ENCODE measurements at regions of chr2 and their contacts with region 1.

Region 1: GRCh38 chr2:240060977-240061591 is 7.8 kb upstream of the OR6B3 start:
- DNase-seq: peak; percentile 42
- H3K4me3 Mint-ChIP-seq: no peak overlapping the region
- H3K27ac Mint-ChIP-seq: no peak overlapping the region
- H3K4me1 Mint-ChIP-seq: no peaks in the 10 kb centered on the region
- H3K27me3 Mint-ChIP-seq: peaks cover 21% of the 10 kb centered on the region

Region 2: DNA sequence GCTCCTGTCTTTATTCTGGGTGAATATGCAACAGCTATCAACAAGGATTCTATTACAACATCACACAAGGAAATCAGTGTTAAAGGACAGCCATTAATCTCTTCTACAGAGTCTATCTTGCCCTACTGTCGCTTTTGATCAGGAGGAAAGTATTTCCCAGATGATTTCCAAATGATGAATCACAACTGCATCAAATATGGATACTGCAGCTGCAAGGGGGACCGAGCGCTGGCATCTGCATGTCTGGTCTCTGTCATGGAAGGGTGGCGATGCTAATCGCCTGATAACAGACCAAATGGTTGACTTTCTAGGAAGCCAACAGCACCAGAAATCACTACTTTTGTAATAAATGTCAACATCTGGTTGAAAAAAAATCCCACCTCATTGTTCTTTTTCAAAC is 13.5 kb after region 1 on chr2:
- CTCF ChIA-PET with region 1: interaction called, 10 read pairs
- POLR2A ChIA-PET with region 1: no interaction called
- intact Hi-C with region 1: no loop called
- DNase-seq: no peak
- H3K4me3 Mint-ChIP-seq: no peak overlapping the region
- H3K27ac Mint-ChIP-seq: no peak overlapping the region
- H3K4me1 Mint-ChIP-seq: no peaks in the 10 kb centered on the region
- H3K27me3 Mint-ChIP-seq: peaks cover 9% of the 10 kb centered on the region

Region 3: GRCh38 chr2:240121675-240122074 is 60.6 kb after region 1 on chr2:
- CTCF ChIA-PET with region 1: interaction called, 10 read pairs
- POLR2A ChIA-PET with region 1: no interaction called
- intact Hi-C with region 1: no loop called
- DNase-seq: no peak
- H3K4me3 Mint-ChIP-seq: no peak overlapping the region
- H3K27ac Mint-ChIP-seq: no peak overlapping the region
- H3K4me1 Mint-ChIP-seq: peaks cover 11% of the 10 kb centered on the region
- H3K27me3 Mint-ChIP-seq: peaks cover 2% of the 10 kb centered on the region

Region 4: DNA sequence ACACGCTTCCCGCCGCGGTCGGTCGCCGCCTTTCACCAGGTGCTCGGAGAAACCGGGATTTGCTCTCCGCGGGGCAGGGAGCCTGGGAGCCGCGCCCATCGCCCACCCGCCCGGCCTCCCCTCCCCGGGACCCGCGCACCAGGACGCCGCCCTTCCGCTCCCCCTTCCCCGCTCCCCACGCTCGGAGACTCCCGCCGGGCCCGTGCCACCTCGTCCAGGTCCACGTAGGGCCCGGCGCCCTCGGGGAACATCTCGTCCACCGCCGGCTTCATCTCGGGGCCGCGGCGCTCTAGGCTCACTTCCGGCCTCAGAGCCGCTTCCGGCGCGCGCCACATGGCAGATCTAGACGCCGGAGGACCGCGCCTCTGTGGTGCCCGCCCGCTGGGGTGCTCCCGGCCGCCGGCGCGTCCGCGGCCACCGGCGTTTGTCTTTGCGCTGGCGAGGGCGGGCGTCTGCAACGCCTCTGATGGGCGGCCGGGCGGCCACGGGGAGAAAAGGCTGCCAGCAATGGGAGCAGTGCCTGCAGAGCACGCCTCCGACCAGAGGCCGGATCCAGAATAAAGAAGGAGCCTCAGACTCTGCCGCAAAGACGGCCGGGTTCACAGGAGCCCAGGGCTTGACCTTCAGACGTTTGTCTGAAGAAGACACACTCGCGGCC is 75.1 kb after region 1 on chr2 and contains the start of gene COPS9:
- CTCF ChIA-PET with region 1: interaction called, 172 read pairs
- POLR2A ChIA-PET with region 1: no interaction called
- intact Hi-C with region 1: no loop called
- DNase-seq: peak; percentile 91
- H3K4me3 Mint-ChIP-seq: peak within 1 kb of the TSS; percentile 92
- H3K27ac Mint-ChIP-seq: peak within 1 kb of the TSS; percentile 69
- H3K4me1 Mint-ChIP-seq: peaks cover 25% of the 10 kb centered on the region
- H3K27me3 Mint-ChIP-seq: no peaks in the 10 kb centered on the region
- total RNA-seq, gene COPS9: 85.2 to 99.9 TPM

Region 5: DNA sequence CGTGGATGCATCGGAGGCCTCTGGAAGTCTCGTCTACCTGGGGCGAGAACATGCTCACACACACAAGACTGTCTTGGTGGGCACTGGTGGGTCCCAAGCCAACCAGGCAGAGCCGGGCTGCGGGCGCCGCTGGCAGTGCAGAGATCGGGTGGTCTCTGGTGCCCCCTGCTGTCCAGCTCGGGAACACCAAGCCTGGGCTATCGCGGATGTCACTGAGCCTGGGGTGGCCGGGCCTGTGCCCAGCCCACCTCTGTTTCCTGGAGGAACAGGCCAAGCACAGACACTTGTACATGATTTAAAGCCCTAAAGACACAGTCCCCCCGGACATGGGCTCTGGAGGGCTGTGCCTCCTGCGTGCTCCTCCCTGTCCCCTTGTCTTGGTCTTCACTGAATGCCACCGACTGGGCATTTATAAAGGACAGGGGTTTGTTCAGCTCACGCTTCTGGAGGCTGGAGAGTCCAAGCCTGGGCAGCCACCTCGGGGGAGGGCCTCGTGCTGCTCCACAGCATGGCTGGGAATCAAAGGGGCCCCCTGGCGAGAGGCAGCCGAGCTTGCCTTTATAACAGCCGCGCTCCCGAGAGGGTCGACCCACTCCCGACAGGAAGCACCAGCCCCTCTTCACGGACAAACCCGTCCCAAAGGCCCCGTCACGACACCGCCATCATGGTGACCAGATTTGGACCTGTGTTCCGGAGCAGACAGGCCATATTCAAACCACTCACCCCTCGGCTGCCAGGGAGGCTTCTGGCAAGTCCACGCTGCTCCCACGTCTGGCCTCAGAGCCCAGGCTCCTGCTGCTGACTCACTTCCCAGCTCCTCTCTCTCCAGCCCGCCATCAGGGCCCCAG is 82.9 kb after region 1 on chr2:
- CTCF ChIA-PET with region 1: interaction called, 172 read pairs
- POLR2A ChIA-PET with region 1: no interaction called
- intact Hi-C with region 1: loop called (anchors 1 kb)
- DNase-seq: peak; percentile 84
- H3K4me3 Mint-ChIP-seq: no peak overlapping the region
- H3K27ac Mint-ChIP-seq: no peak overlapping the region
- H3K4me1 Mint-ChIP-seq: no peaks in the 10 kb centered on the region
- H3K27me3 Mint-ChIP-seq: peaks cover 5% of the 10 kb centered on the region

Measured in activated CD4-positive, alpha-beta memory T cell treated with anti-CD3 and anti-CD28 coated beads for 36 hours (primary cell).